Common myeloid progenitor, CD34-positive (primary cell): ENCODE measurements at regions of chr22 and their contacts with region 1.

Region 1: GRCh38 chr22:37508431-37508992 is 10.7 kb downstream of the CARD10 start:
- DNase-seq: no peak
- H3K4me3 ChIP-seq: no peak overlapping the region
- H3K27ac ChIP-seq: no peak overlapping the region
- H3K4me1 ChIP-seq: peaks cover 0 to 12% (median 0%) of the 10 kb centered on the region in 4 experiments
- H3K27me3 ChIP-seq: no peaks in the 10 kb centered on the region

Region 2: GRCh38 chr22:37492428-37493344 is 15.8 kb before region 1 on chr22:
- CTCF ChIA-PET with region 1: interaction called, 66 read pairs
- POLR2A ChIA-PET with region 1: interaction called, 4 read pairs
- DNase-seq: peak; percentile 39 to 67 (median 66)
- H3K4me3 ChIP-seq: no peak overlapping the region
- H3K27ac ChIP-seq: no peak overlapping the region
- H3K4me1 ChIP-seq: peaks cover 0 to 12% (median 6%) of the 10 kb centered on the region in 4 experiments
- H3K27me3 ChIP-seq: no peaks in the 10 kb centered on the region

Region 3: DNA sequence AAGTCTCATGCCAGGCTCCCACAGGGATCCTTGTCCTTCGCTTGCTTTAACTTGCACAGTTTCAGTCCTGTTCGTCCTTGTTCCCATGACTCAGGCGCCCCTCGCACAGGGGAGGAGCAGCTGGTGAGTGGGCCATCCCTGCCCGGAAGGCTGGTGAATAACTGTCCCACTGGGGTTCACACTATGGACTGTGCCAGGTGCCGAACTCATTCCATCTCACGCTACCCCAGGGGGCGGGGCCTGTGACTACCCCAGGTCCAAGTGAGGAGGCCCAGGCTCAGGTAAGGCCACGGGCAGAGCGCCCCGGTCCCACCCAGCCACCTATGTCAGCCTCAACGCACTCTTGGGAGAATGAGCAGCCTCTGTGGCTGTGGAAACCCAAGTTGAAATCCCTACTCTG is 17.9 kb after region 1 on chr22:
- CTCF ChIA-PET with region 1: interaction called, 10 read pairs
- POLR2A ChIA-PET with region 1: no interaction called
- DNase-seq: no peak
- H3K4me3 ChIP-seq: no peak overlapping the region
- H3K27ac ChIP-seq: no peak overlapping the region
- H3K4me1 ChIP-seq: peaks cover 0 to 16% (median 12%) of the 10 kb centered on the region in 4 experiments
- H3K27me3 ChIP-seq: peaks cover 0 to 2% (median 0%) of the 10 kb centered on the region in 5 experiments

Region 4: DNA sequence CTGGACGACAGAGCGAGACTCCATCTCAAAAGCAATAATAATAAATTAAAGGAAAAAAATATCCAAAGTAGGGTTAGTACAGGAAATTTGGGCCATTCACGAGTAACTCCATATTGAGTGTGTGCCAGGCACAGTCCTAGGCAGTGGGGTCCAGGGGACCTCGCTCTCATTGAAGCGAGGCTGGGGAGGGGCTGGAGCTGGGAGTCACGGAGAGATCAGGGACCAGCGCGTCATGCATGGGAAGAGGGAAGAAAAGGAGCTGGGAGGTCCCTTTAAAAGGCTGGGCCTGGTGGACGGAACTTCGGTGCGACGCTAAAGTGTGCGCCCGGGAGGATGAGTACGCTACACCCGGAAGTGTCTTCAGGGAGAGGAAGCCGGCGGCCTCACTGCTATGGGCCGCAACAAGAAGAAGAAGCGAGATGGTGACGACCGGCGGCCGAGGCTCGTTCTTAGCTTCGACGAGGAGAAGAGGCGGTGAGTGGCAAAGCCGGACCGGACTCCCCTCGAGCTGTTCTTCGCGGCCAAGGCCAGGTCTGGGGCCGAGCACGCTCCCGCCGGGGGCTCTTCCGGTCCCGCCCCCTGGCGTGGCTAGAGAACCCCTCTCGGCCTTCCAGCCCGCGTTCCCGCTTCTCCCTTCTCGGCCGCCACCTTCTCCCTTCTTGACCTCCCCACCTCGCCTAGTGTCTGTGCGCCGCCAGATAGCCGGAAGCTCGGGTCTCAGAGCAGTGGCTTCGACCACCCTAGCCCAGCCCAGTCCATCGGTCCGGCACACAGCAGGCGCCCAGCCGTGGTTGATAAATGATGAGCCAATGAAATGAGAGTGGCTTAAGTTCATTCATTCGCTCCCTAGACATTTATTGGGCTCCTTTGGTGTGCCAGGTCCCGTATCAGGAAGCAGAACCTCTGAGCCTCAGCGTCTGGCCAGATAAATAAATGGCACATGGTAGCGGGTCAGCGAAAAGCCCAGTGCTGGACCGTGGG is 177.8 kb after region 1 on chr22 and contains the start of gene NOL12:
- CTCF ChIA-PET with region 1: no interaction called
- POLR2A ChIA-PET with region 1: no interaction called
- DNase-seq: peak; percentile 88 to 91 (median 89)
- H3K4me3 ChIP-seq: peak within 1 kb of the TSS; percentile 81 to 98 (median 96)
- H3K27ac ChIP-seq: peak within 1 kb of the TSS; percentile 79 to 91
- H3K4me1 ChIP-seq: peaks cover 0 to 22% (median 20%) of the 10 kb centered on the region in 4 experiments
- H3K27me3 ChIP-seq: no peaks in the 10 kb centered on the region